Cardiac septum (tissue), 1 donor: ENCODE measurements at regions of chr17 and their contacts with region 1.

Region 1: GRCh38 chr17:18314731-18315561 is at the starts of genes SMCR8 and TOP3A:
- DNase-seq: peak; percentile 98
- total RNA-seq, gene SMCR8: 9.9 TPM
- total RNA-seq, gene TOP3A: 14.1 TPM

Region 2: DNA sequence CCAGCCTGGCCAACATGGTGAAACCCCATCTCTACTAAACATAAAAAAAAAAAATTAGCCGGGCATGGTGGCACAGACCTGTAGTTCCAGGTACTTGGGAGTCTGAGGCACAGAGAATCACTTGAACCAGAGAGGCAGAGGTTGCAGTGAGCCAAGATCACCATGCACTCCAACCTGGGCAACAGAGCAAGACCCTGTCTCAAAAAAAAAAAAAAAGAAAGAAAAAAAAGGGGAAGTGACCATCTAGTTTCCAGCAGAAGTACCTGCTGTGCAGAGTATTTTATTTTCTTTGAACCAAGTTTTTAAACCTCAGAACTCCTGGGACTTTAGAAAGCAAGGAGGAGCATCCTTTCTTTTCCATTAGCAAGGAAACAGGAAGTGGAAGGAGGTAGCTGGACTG is 269.3 kb before region 1 on chr17:
- intact Hi-C with region 1: no loop called
- DNase-seq: no peak

Region 3: DNA sequence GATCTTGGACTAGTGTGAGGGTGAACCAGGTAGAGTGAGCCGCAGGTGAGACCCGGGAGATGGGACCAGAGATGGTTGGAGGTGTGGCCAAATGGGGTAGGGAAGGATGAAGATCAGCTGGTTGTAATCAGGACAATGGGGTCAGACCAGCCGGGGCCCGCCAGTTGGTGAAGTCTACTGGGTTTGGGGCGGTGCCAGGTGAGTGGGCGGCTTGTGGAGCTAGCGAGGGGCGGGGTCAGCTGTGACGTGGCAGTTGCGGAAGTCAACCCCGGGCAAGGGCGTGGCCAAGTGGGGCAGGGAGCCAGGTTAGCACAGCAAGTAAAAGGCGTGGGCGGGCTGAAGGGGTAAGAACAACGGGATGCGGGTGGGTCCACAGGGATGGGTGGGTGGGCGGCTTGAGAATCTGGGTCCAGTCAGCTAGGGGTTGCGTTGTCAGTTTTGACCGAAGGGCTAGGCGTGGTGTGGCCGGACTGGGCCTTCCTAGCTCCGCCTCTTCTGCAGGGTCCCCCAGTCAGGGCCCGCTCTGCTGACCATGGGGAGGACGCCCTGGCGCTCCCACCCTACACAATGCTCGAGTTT is 156.8 kb before region 1 on chr17:
- intact Hi-C with region 1: no loop called
- DNase-seq: peak; percentile 98

Region 4: GRCh38 chr17:18225121-18225566 is 89.8 kb before region 1 on chr17:
- intact Hi-C with region 1: loop called (anchors 2 kb)
- DNase-seq: peak; percentile 98

Region 5: GRCh38 chr17:18248300-18248731 is 66.6 kb before region 1 on chr17:
- intact Hi-C with region 1: loop called (anchors 5 kb)
- DNase-seq: no peak

Region 6: GRCh38 chr17:18260332-18261144 is 54.4 kb before region 1 on chr17 and contains the start of gene MIEF2:
- intact Hi-C with region 1: loop called (anchors 2 kb)
- DNase-seq: peak; percentile 98
- total RNA-seq, gene MIEF2: 28.0 TPM

Region 7: DNA sequence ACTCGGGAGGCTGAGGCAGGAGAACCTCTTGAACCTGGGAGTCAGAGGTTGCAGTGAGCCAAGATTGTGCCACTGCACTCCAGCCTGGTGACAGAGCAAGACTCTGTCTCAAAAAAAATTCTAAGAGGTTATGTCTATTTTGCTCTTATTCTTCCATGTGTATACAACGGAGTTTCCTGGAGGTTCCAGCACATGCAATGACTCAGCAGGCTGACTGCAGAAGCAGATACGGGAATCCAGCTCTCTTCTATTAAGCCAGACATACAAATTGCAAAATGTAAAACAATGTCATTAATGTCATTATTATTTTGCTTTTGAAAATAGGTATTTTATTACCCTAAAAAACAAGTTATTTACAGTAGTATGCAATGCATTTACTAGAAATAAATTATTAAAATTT is 36.1 kb before region 1 on chr17:
- intact Hi-C with region 1: no loop called
- DNase-seq: no peak

Region 8: DNA sequence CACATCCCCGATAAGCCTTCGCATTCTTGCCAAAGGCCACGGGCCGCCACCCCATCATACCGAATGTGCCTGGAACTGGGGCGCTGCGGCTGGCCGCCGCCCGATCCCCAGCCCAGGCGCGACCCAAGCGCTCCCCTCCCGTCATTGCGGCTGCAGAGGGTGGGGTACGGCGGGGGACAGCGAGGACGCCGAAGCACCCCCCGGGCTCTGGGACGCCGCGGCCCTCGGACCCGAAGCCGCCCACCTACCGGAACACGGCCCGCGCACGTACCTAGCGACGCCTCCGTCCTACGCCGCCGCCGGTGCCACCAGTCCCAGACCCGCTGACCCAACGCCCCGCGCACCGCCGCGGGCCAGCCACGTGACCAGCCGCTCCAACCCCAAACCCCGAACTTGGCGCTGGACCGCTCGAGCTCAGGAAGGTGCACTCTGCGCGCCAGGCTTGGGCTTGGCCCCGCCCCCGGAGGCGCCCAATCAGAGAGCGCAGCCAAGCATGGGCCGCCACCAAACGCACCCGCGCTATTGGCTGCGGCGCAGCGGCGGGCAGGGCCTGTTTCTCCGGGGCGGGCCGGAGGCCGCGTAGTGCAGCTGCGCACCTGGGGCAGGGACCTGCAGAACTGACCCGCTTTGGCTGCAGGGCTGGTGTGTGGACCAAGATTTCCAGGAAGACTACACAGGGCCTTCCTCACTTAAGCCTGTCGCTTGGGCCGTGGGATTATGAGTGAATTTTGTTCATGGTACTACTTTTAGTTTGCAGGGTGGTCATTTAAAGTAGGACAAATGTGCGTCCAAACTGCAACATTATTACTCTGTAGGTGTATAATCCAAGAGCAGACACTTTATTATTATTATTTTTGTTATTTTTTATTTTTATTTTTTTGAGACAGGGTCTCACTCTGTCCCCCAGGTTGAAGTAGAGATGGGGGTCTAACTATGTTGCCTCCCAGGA is 48.4 kb after region 1 on chr17 and contains the start of gene SHMT1:
- intact Hi-C with region 1: loop called (anchors 5 kb)
- DNase-seq: peak; percentile 96
- total RNA-seq, gene SHMT1: 2.3 TPM